Right ventricle myocardium inferior (tissue), 1 donor: ENCODE measurements at regions of chr1 and their contacts with region 1.

Region 1: GRCh38 chr1:207077470-207078377 is 10.9 kb upstream of the C4BPB start:
- DNase-seq: no peak
- ATAC-seq: peak; percentile 81

Region 2: DNA sequence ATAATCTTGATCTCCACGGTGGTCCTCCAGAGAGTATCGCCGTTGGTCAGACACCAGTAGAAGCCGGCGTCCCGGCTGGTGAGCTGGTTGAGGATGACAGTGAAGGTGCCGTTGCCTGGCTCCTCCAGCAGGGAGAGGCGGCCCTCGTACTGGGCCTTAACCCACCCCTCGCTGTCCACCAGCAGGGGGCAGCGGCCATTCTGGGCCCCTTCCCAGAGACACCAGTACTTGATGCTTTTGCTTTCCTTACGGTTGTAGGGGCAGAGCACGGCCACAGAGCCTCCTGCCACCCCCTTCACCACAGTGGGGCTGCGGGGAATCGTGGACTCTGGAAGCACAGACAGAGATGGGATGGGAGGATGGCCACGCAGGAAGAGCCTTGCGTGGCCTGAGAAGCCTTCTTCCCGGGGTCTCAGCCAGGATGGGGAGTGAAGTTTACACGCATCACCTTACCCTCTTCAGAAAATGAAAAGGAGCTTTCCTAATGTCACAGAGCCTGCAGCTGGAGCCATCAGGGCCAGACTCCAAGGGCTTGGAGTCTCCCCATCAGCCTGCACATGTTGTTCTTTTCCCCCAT is 142.1 kb before region 1 on chr1:
- intact Hi-C with region 1: loop called (anchors 10 kb)
- DNase-seq: no peak
- ATAC-seq: no peak

Region 3: GRCh38 chr1:207124389-207124788 is 46.7 kb after region 1 on chr1:
- intact Hi-C with region 1: no loop called
- DNase-seq: no peak
- ATAC-seq: no peak

Region 4: DNA sequence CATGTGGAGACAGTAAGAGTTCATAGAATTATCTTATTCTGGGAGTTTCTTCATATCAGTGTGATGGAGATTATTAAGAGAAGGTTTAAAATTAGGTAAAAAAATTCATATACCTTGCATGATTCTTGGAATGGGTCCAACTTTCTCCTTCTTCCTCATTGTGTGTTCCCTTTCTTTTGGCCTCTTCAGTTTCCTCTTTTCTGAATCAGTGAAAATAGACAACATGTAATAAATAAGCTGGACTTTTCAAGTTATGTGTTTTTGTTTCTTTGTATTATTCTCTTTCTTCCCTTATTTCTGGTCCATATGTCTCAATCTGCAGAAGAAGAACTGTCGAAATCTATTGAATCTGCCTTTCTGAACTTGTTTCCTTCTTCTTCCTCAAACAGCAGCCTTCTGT is 56.9 kb after region 1 on chr1:
- intact Hi-C with region 1: no loop called
- DNase-seq: no peak
- ATAC-seq: no peak